ENCODE measurements at regions of chr11 and their contacts with region 1.

Region 1: GRCh38 chr11:129117595-129118350 is 74.4 kb downstream of the ARHGAP32 start:
- DNase-seq: no peak
- H3K4me3 Mint-ChIP-seq: no peak overlapping the region
- H3K27ac Mint-ChIP-seq: no peak overlapping the region
- H3K4me1 Mint-ChIP-seq: no peaks in the 10 kb centered on the region
- H3K27me3 Mint-ChIP-seq: peaks cover 2% of the 10 kb centered on the region

Region 2: GRCh38 chr11:129279326-129280026 is 161.7 kb after region 1 on chr11:
- intact Hi-C with region 1: loop called (anchors 2 kb)
- DNase-seq: peak; percentile 74
- H3K4me3 Mint-ChIP-seq: peak overlapping the region; percentile 79
- H3K27ac Mint-ChIP-seq: peak overlapping the region; percentile 81
- H3K4me1 Mint-ChIP-seq: peaks cover 40% of the 10 kb centered on the region
- H3K27me3 Mint-ChIP-seq: peaks cover 29% of the 10 kb centered on the region

Region 3: DNA sequence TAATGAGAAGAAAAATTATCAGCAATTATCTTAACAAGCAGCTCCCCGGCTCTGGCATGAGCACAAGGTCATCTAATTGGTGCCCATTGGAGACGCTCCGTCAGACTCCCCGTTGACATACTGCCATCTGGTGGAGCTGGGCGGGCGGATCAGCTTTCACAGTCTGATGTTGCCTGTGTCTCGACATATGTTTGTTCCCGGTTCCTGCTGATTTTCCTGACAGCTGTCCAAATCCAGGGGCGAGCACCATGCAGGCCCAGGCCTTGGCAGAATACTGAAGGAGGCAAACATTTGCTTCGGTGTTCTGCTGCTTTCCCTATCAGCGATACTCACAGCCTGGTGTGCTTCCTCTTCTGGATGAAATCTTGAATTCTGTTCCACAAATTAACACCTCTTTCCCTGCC is 214.1 kb after region 1 on chr11:
- intact Hi-C with region 1: loop called (anchors 1 kb)
- DNase-seq: peak; percentile 34
- H3K4me3 Mint-ChIP-seq: no peak overlapping the region
- H3K27ac Mint-ChIP-seq: no peak overlapping the region
- H3K4me1 Mint-ChIP-seq: no peaks in the 10 kb centered on the region
- H3K27me3 Mint-ChIP-seq: no peaks in the 10 kb centered on the region

Region 4: GRCh38 chr11:129364143-129364654 is 246.4 kb after region 1 on chr11:
- intact Hi-C with region 1: loop called (anchors 1 kb)
- DNase-seq: peak; percentile 75
- H3K4me3 Mint-ChIP-seq: no peak overlapping the region
- H3K27ac Mint-ChIP-seq: no peak overlapping the region
- H3K4me1 Mint-ChIP-seq: no peaks in the 10 kb centered on the region
- H3K27me3 Mint-ChIP-seq: peaks cover 34% of the 10 kb centered on the region

Region 5: GRCh38 chr11:129695575-129696308 is 578.0 kb after region 1 on chr11:
- intact Hi-C with region 1: loop called (anchors 1 kb)
- DNase-seq: peak; percentile 26
- H3K4me3 Mint-ChIP-seq: peak overlapping the region; percentile 56
- H3K27ac Mint-ChIP-seq: peak overlapping the region; percentile 31
- H3K4me1 Mint-ChIP-seq: peaks cover 5% of the 10 kb centered on the region
- H3K27me3 Mint-ChIP-seq: no peaks in the 10 kb centered on the region

Region 6: GRCh38 chr11:129750349-129751292 is 632.8 kb after region 1 on chr11:
- intact Hi-C with region 1: loop called (anchors 1 kb)
- DNase-seq: peak; percentile 71
- H3K4me3 Mint-ChIP-seq: no peak overlapping the region
- H3K27ac Mint-ChIP-seq: no peak overlapping the region
- H3K4me1 Mint-ChIP-seq: no peaks in the 10 kb centered on the region
- H3K27me3 Mint-ChIP-seq: peaks cover 4% of the 10 kb centered on the region